GM13977 (cell line): ENCODE measurements at regions of chr7 and their contacts with region 1.

Region 1: DNA sequence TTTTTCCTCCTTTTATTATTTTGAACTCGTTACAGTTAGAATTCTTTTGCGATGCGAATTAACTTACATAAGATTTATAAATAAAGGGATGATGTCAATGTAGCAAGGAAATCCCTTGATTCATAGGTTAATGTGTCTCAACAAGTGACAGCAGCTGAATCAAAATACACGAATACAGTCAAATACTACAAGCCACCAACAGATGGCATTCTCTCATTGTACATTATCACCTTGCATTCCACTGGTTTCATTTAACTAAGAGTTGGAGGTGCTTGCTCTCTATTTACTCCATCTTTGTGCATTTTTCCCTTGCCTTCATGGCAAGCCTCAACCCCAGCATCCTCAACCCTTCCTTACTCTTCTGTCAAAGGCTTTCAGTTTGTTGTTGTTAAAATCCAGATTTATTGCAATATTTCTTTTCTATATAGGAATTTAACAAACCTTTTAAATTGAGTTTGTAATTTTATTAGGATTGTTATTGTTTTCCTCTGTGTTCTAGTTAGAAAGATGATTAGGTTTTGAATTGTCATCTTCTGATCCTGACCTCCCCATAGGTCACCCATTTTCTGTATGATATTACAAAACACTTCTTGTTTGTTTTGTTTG is 78.3 kb downstream of the SLC25A40 start:
- DNase-seq: peak; percentile 46
- CTCF ChIP-seq: peak; percentile 70

Region 2: GRCh38 chr7:87886875-87887274 is 89.0 kb after region 1 on chr7:
- in situ Hi-C with region 1: loop called (anchors 10 kb)
- DNase-seq: no peak
- CTCF ChIP-seq: peak; percentile 50

Region 3: DNA sequence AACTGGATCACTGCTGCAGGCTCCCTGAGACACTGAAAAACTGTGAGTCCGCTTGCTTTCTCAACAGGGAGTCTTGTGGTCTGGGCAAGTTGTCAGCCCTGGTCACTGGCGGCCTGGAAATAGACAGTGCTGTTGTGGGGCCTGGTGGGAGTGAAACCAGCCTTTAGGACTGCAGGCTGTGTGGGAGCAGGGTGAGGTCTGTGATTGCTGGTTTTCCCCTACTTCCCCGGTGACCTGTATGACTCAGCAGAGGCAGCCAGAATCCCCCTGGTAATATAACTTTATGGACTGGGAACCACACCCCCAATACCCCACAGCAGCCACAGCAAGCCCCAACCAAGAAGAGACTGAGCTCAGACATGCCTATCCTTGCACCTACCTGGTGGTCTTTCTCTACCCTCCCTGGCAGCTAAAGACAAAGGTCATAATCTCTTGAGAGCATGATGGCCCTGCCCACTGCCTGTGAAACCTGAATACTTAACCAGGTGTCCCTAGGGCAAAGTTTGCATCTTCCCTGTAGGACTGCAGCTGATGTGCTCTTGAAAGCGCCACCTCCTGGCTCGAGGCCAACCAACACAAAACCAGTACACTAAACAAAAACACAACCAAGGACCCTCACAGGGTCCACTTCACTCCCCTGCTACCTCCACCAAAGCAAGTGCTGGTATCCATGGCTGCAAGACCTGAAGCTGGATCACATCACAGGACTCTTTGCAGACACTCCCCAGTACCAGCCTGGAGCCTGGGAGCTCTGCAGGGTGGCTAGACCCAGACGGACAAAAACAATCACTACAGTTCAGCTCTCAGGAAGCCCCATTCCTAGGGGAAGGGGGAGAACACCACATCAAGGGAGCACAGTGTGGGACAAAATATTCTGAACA is 128.9 kb after region 1 on chr7:
- in situ Hi-C with region 1: no loop called
- DNase-seq: peak; percentile 26
- CTCF ChIP-seq: peak; percentile 49